K562 (cell line): ENCODE measurements at regions of chr4 and their contacts with region 1.

Region 1: GRCh38 chr4:82201805-82202641 is 171.8 kb downstream of the HNRNPD start:
- DNase-seq: peak; percentile 13 to 72 (median 19)
- ATAC-seq: peak; percentile 90
- H3K4me3 ChIP-seq: no peak overlapping the region
- H3K27ac ChIP-seq: no peak overlapping the region
- H3K4me1 ChIP-seq: no peaks in the 10 kb centered on the region
- H3K27me3 ChIP-seq: no peaks in the 10 kb centered on the region
- CTCF ChIP-seq: peak; percentile 73 to 87 (median 80)
- EP300 ChIP-seq: no peak
- POLR2A ChIP-seq: no peak
- RAD21 ChIP-seq: peak; percentile 90 to 92

Region 2: DNA sequence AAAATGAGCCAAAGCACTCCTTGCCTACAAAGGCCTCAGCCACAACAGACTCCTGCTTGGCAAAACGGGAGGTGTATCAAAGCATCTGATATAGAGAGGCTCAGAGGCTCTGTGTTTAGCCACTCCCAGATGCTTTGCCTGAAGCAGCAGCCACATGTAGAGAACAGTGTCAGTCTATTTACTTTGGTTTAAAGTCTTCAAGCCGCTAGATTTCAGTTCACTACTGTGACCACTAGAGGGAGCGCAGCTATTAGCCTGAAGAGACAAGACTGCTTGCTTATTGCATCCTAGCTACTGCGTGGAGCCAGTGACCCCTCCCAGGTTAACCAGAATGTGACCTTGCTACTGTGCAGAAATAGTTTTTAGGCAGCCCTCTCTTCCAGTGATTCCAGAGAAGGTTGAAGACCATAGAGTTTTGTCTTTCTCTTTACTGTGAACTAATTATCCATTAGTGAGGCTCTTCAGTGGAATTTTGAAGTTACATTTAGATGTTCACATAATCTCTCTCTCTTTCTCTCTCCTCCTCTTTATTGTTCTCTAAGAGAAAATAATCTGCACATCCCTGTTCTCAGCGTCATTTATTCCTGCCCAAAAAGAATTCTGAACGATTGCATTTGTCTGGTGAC is 1132.2 kb before region 1 on chr4:
- CTCF ChIA-PET with region 1: no interaction called
- POLR2A ChIA-PET with region 1: no interaction called
- in situ Hi-C with region 1: no loop called
- intact Hi-C with region 1: loop called (anchors 1 kb)
- DNase-seq: peak; percentile 47 to 81 (median 56)
- ATAC-seq: peak; percentile 97
- H3K4me3 ChIP-seq: no peak overlapping the region
- H3K27ac ChIP-seq: no peak overlapping the region
- H3K4me1 ChIP-seq: no peaks in the 10 kb centered on the region
- H3K27me3 ChIP-seq: no peaks in the 10 kb centered on the region
- CTCF ChIP-seq: peak; percentile 79 to 88 (median 80)
- EP300 ChIP-seq: no peak
- POLR2A ChIP-seq: no peak
- RAD21 ChIP-seq: peak; percentile 69 to 80

Region 3: DNA sequence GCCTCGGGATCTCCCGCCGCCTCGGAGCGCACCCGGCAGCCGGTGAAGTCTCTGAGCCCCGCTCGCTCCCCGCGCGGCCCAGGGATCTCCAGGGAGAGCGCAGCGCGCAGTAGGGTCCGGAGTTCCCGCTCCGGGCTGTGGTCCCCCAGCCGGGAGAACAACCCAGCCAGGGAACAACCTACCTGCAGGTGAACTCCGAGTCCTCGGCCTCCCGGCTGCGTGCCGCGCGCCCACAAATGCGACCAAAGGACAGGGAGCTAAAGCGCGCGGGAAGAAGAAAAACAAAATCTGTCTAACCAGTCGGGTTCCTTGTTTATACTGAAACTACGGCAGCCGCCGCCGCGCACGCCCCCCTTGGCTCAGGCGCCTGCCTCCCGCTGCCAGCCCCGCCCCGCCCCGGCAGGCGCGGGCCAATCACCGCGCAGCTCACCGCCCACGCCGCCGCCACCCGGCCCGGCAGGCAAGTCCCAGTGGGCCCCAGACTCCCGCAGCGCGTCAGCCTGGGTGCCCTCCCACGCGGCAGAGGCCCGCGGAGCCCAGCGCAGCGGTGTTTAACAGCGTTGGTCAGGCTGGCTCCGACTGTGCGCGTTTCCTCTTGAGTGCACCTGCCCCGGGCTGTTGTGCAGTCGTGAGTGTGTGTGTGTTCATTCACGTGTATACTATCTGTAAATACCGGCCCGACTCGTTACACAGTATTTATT is 730.3 kb before region 1 on chr4 and contains the start of gene RASGEF1B:
- CTCF ChIA-PET with region 1: interaction called, 11 read pairs
- POLR2A ChIA-PET with region 1: no interaction called
- in situ Hi-C with region 1: loop called (anchors 10 kb)
- intact Hi-C with region 1: loop called (anchors 1 kb)
- DNase-seq: peak; percentile 88 to 98 (median 96)
- ATAC-seq: peak; percentile 99
- H3K4me3 ChIP-seq: peak within 1 kb of the TSS; percentile 64
- H3K27ac ChIP-seq: no peak within 1 kb of the TSS; the same call in 2 of the 3 replicates
- H3K4me1 ChIP-seq: peaks cover 19% of the 10 kb centered on the region in 2 experiments; a peak in 4 of 5 replicates
- H3K27me3 ChIP-seq: peaks cover 17 to 24% of the 10 kb centered on the region in 2 experiments
- CTCF ChIP-seq: no peak
- EP300 ChIP-seq: no peak
- POLR2A ChIP-seq: no peak
- RAD21 ChIP-seq: no peak
- polyA plus RNA-seq, gene RASGEF1B: 0.04 to 0.20 TPM

Region 4: DNA sequence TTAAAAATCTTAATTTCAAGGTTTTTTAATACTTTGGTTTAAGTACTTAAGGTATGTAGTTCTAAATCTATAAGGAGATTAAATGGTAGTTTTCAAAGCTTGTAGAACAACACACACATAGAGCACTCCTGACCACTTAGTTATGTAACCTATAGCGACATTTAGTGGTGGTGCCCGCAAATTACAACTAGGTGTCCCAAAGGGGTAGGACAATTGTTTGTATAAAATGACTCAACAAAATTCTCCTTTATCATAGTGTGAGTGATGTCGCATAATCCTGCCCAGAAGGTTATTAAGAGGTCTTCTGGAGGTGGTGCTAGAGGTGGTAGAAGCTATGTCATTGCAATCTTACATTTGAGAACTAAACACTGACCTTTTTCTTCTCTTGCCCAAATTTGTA is 357.3 kb before region 1 on chr4:
- CTCF ChIA-PET with region 1: no interaction called
- POLR2A ChIA-PET with region 1: no interaction called
- in situ Hi-C with region 1: no loop called
- intact Hi-C with region 1: loop called (anchors 1 kb)
- DNase-seq: peak; percentile 56 to 82 (median 68)
- ATAC-seq: peak; percentile 99
- H3K4me3 ChIP-seq: no peak overlapping the region
- H3K27ac ChIP-seq: no peak overlapping the region
- H3K4me1 ChIP-seq: peaks cover 0 to 11% of the 10 kb centered on the region in 2 experiments; a peak in 2 of 5 replicates
- H3K27me3 ChIP-seq: peaks cover 0 to 8% of the 10 kb centered on the region in 2 experiments; a peak in 2 of 5 replicates
- CTCF ChIP-seq: peak; percentile 63 to 90 (median 84)
- EP300 ChIP-seq: no peak
- POLR2A ChIP-seq: no peak
- RAD21 ChIP-seq: peak; percentile 91 to 92

Region 5: DNA sequence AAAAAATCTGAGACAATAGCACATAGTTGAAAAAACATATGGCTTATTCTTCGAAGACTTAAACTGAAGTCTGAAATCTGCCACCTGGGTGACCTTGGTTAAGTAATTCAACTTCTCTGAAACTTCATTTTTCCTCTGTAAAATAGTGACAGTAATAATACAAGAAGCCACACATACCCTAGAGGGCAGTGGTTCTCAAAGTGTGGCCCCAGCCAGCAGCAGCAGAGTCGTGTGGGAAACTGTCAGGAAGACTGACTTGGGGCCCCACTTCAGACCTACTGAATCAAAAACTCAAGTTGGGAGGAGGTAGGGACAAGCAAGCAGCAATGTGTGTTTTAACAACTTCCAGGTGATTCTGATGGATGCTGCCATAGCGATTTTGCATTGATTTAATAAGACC is 78.1 kb before region 1 on chr4:
- CTCF ChIA-PET with region 1: no interaction called
- POLR2A ChIA-PET with region 1: no interaction called
- in situ Hi-C with region 1: no loop called
- intact Hi-C with region 1: loop called (anchors 2 kb)
- DNase-seq: peak in 1 of 4 experiments; percentile 18
- ATAC-seq: peak; percentile 81
- H3K4me3 ChIP-seq: no peak overlapping the region
- H3K27ac ChIP-seq: no peak overlapping the region
- H3K4me1 ChIP-seq: peaks cover 0 to 20% of the 10 kb centered on the region in 2 experiments; a peak in 3 of 5 replicates
- H3K27me3 ChIP-seq: no peaks in the 10 kb centered on the region
- CTCF ChIP-seq: peak in 2 of 3 experiments; percentile 36 to 47; a peak in 3 of 6 replicates
- EP300 ChIP-seq: no peak
- POLR2A ChIP-seq: no peak
- RAD21 ChIP-seq: peak; percentile 45 to 54

Region 6: GRCh38 chr4:82268050-82268825 is 66.2 kb after region 1 on chr4:
- CTCF ChIA-PET with region 1: no interaction called
- POLR2A ChIA-PET with region 1: no interaction called
- in situ Hi-C with region 1: no loop called
- intact Hi-C with region 1: loop called (anchors 5 kb)
- DNase-seq: peak; percentile 22 to 59 (median 41)
- ATAC-seq: peak; percentile 99
- H3K4me3 ChIP-seq: no peak overlapping the region
- H3K27ac ChIP-seq: no peak overlapping the region
- H3K4me1 ChIP-seq: no peaks in the 10 kb centered on the region
- H3K27me3 ChIP-seq: peaks cover 7 to 20% of the 10 kb centered on the region in 2 experiments; a peak in 4 of 5 replicates
- CTCF ChIP-seq: peak; percentile 74 to 81 (median 76)
- EP300 ChIP-seq: no peak
- POLR2A ChIP-seq: no peak
- RAD21 ChIP-seq: peak; percentile 79 to 83